Aorta (tissue), 5 donors: ENCODE measurements at regions of chr2 and their contacts with region 1.

Region 1: DNA sequence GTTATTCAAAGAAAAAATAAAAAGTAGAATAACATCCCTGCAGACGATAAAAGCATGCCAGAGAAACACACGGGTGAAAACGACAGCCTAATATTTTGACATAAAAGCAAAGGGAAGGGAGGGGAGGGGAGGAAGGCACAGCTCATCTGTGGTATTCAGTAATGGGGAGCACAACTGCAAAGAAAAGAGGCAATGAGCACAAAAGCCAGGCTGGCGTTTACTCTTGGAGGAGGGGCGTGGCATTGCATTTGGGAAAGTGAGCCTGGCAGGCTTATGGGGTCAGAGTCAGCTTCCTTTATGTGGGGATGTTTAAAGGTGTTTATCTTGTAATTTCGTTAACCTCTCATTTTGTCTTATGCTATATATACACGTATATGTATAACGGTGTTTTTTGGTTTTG is 53.2 kb downstream of the STEAP3 start:
- DNase-seq: no peak
- ATAC-seq: no peak
- H3K4me3 ChIP-seq: no peak overlapping the region
- H3K27ac ChIP-seq: no peak overlapping the region
- H3K4me1 ChIP-seq: peaks cover 0 to 2% of the 10 kb centered on the region in 2 donors
- H3K27me3 ChIP-seq: no peaks in the 10 kb centered on the region

Region 2: DNA sequence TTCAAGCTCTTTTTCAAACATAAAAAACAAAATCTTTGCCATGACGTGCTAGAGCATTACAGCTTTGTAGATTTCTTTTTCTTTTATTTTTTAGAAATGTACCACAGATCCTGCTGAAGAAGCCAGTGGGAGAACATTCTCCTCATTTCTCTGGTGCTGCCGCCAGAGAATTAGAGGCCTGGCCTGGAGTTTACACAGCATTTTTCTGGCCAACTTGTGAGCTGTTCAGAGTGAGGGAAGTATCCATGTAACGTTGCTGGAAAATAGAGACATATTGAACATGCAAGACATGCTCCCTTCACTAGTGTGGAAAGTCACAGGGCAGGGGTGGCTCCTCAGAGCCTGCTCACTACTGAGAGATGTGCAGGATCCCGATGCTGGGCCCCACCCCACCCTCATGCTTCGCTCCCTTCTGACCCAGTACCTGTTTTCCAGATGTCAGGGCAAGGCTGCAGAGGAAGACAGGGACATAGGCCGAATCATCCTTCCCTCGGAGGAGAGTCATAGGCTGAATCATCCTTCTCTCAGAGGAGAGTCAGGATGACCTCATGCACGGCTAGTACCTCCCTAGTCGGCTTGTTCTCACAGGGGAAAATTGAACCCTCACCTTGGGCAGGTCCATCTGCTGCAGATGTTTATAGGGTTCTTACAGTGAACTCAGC is 890.1 kb before region 1 on chr2:
- intact Hi-C with region 1: loop called in 1 of 2 experiments (anchors 10 kb)
- DNase-seq: no peak
- ATAC-seq: peak; percentile 31
- H3K4me3 ChIP-seq: no peak overlapping the region
- H3K27ac ChIP-seq: no peak overlapping the region
- H3K4me1 ChIP-seq: no peaks in the 10 kb centered on the region
- H3K27me3 ChIP-seq: no peaks in the 10 kb centered on the region

Region 3: GRCh38 chr2:118954297-118955060 is 322.4 kb before region 1 on chr2:
- intact Hi-C with region 1: no loop called
- DNase-seq: no peak
- ATAC-seq: no peak
- H3K4me3 ChIP-seq: no peak overlapping the region
- H3K27ac ChIP-seq: no peak overlapping the region
- H3K4me1 ChIP-seq: no peaks in the 10 kb centered on the region
- H3K27me3 ChIP-seq: peaks cover 0 to 1% of the 10 kb centered on the region in 2 donors

Region 4: DNA sequence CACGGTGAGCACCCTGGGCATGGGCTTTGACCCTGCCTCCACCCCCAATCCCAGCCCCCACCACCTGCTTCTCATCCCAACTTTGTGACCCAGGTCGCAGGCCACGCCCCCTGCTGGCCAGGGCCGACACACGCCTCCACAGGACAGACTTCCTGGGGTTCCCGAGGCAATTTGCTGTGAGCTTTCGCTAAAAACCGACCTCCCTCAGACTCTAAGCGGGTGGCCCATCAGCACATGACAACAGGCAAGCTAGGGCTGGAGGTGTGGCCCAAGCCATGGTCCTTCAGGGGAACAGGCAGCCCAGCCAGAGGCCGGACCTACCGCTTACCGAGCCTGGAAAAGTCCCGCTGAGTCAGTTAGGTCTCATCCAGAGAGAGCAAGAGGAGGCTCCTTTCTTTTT is 150.2 kb before region 1 on chr2:
- intact Hi-C with region 1: no loop called
- DNase-seq: no peak
- ATAC-seq: no peak
- H3K4me3 ChIP-seq: no peak overlapping the region
- H3K27ac ChIP-seq: no peak overlapping the region
- H3K4me1 ChIP-seq: no peaks in the 10 kb centered on the region
- H3K27me3 ChIP-seq: no peaks in the 10 kb centered on the region